Endothelial cell of umbilical vein (primary cell): ENCODE measurements at regions of chr16 and their contacts with region 1.

Region 1: DNA sequence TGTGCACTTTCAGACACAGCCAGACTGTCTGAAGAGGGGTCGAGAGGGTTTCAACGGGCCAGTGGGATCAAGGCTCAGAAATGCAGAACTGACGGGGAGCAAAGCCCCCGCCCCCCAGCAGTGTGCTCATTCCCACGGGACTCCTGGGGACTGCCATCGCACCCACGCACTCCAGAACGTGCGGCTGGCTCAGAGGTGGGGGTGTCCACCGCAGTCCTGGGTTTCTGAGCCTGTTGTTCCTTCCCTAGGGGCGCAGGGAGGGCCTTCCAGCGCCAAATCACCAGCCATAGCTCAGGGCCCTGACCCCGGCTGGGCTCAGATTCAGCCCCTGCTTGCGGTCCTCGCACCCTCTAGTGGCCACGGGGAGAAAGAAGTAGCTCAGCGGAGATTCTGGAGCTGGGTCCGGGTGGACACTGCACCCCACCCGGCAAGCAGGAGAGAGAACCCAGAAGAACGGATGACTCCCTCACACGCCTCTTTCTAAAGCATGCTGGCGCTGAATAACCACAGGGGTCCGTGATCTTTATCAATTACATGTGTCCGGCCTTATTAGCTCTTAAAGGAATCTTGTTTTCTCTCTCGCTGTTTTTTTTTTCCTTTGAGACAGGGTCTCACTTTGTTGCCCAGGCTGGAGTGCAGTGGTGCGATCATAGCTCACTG is 45.0 kb upstream of the USP7 start:
- DNase-seq: peak; percentile 59
- H3K4me3 ChIP-seq: peak overlapping the region in 1 of 3 experiments; percentile 3
- H3K27ac ChIP-seq: no peak overlapping the region
- H3K4me1 ChIP-seq: peaks cover 4% of the 10 kb centered on the region
- H3K27me3 ChIP-seq: no peaks in the 10 kb centered on the region
- CTCF ChIP-seq: peak; percentile 70 to 90
- POLR2A ChIP-seq: no peak

Region 2: DNA sequence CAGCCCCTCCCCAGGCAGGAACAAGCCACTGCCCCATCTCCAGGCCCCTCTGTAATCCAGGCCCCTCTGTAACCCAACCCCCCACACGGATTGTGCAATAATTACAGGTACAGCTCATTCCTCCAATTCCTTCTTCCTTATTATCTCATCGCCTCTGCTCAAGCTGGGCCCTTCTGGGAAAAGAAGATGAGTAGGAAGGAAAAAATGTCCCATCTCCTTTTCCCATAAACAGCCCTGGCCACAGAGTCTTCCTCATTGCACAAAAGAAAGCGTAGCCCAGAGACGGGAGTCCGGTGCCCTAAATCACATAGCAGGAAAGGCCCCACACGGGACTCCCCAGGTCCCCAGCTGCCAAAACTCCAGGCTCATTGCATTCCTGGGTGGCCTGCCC is 130.2 kb before region 1 on chr16:
- CTCF ChIA-PET with region 1: interaction called, 23 read pairs
- POLR2A ChIA-PET with region 1: no interaction called
- dilution Hi-C with region 1: no loop called
- intact Hi-C with region 1: no loop called
- DNase-seq: no peak
- H3K4me3 ChIP-seq: no peak overlapping the region
- H3K27ac ChIP-seq: no peak overlapping the region
- H3K4me1 ChIP-seq: no peaks in the 10 kb centered on the region
- H3K27me3 ChIP-seq: peaks cover 0 to 2% of the 10 kb centered on the region in 2 experiments
- CTCF ChIP-seq: no peak
- POLR2A ChIP-seq: no peak

Region 3: GRCh38 chr16:8905168-8905762 is 103.5 kb before region 1 on chr16:
- CTCF ChIA-PET with region 1: interaction called, 42 read pairs
- POLR2A ChIA-PET with region 1: no interaction called
- dilution Hi-C with region 1: no loop called
- intact Hi-C with region 1: loop called (anchors 1 kb)
- DNase-seq: peak; percentile 42
- H3K4me3 ChIP-seq: no peak overlapping the region
- H3K27ac ChIP-seq: no peak overlapping the region
- H3K4me1 ChIP-seq: no peaks in the 10 kb centered on the region
- H3K27me3 ChIP-seq: no peaks in the 10 kb centered on the region
- CTCF ChIP-seq: peak; percentile 27 to 50
- POLR2A ChIP-seq: no peak

Region 4: DNA sequence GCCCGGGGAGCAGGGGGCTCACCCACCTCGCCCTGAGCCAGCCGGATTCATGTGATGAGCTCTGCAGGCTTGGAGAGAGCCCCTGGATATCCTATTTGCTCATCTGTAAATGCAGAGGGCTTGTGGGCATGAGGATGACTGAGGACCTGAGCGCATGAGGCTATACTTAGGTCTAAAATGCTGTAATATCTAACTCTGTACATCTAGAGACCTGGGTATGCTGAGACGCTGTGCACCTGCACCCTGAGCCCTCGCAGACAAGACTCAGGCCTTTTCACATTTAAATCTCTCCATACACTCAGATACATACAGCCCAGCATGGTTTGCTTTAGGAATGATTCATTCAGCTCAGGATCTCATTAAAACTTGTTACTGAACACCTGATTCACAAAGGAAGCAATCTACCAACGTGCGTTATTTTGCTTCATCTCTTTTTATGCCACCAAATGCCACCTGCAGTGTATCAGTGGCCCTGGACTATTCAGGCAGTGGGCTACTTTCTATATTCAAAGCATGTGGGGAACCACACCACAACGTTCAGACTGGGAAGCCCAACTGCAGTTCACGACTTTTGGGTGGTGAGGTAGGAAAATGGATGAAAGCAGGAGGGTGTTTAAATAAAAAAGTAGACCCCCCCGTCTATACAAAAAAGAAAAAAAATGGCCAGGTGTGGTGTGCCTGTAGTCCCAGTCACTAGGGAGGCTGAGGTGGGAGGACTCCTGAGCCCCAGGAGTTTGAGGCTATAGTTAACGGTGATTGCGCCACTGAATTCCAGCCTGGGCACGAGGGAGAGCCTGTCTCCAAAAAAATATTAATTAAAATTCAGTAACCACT is 57.1 kb before region 1 on chr16:
- CTCF ChIA-PET with region 1: interaction called, 19 read pairs
- POLR2A ChIA-PET with region 1: no interaction called
- dilution Hi-C with region 1: no loop called
- intact Hi-C with region 1: no loop called
- DNase-seq: no peak
- H3K4me3 ChIP-seq: no peak overlapping the region
- H3K27ac ChIP-seq: no peak overlapping the region
- H3K4me1 ChIP-seq: no peaks in the 10 kb centered on the region
- H3K27me3 ChIP-seq: no peaks in the 10 kb centered on the region
- CTCF ChIP-seq: no peak
- POLR2A ChIP-seq: no peak

Region 5: DNA sequence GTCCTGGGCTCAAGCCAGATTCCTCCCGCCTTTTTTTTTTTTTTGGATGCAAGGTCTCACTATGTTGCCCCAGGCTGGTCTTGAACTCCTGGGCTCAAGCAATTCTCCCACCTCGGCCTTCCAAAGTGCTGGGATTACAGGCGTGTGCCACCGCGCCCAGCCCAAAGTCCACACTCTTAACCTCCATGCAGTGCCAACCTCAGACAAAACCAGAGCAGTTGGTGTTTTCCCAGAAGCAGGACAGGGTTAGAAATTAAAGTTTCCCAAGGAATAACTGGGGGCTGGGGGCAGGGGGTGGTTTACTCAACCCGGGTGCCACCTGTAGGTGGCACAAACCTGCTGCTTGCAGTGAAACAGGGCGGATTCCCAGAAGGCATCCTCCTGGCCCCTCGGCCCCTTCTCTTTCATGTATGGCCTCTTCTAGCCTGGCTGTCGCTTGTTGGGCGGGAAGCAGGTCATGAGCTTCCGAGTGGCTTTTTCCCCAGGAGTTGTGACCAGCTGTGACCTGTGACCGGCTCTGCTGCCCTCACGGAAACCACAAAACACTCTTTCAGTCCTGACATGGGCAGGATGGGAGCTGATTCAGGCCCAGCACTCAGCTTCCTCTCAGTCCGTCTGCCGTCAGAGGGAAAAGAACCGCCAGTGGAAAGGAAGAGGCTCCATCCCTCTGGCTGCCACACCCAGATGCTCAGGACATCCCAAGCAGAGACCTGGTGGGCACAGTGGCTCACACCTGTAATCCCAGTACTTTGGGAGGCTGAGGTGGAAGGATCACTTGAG is 19.4 kb before region 1 on chr16:
- CTCF ChIA-PET with region 1: interaction called, 24 read pairs
- POLR2A ChIA-PET with region 1: no interaction called
- dilution Hi-C with region 1: no loop called
- intact Hi-C with region 1: no loop called
- DNase-seq: no peak
- H3K4me3 ChIP-seq: no peak overlapping the region
- H3K27ac ChIP-seq: no peak overlapping the region
- H3K4me1 ChIP-seq: no peaks in the 10 kb centered on the region
- H3K27me3 ChIP-seq: no peaks in the 10 kb centered on the region
- CTCF ChIP-seq: no peak
- POLR2A ChIP-seq: no peak

Region 6: DNA sequence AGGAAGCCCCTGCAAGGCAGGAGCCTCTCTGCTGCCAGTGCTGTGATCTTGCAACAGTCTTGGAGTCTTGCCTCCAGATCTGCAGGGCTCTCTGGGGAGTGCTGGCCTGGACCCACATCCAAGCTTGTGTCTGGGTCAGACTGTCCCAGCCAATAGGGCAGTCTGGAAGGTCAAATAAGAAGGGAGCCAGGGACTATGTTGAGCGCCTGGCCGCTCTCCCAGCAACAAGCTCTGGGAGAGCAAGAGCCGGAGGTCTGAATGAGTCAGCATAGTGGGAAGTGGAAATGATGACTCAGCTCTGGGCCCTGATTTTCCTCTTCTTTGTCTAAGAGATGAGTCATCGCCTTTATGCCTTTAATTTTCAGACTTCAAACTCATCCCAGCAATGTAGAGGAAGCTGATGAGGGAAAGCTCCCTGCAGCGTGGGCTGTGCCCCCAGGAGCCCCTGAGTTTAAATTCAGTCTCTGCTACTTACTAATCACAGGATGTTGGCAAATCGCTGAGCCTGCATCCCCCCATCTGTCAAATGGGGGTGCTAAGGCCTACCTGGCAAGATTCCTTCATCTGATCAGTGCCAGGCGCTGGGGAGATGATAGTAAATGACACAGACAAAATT is 39.1 kb after region 1 on chr16:
- CTCF ChIA-PET with region 1: interaction called, 30 read pairs
- POLR2A ChIA-PET with region 1: no interaction called
- dilution Hi-C with region 1: no loop called
- intact Hi-C with region 1: no loop called
- DNase-seq: peak; percentile 98
- H3K4me3 ChIP-seq: no peak overlapping the region
- H3K27ac ChIP-seq: peak overlapping the region; percentile 94
- H3K4me1 ChIP-seq: peaks cover 15% of the 10 kb centered on the region
- H3K27me3 ChIP-seq: no peaks in the 10 kb centered on the region
- CTCF ChIP-seq: no peak
- POLR2A ChIP-seq: no peak

Region 7: DNA sequence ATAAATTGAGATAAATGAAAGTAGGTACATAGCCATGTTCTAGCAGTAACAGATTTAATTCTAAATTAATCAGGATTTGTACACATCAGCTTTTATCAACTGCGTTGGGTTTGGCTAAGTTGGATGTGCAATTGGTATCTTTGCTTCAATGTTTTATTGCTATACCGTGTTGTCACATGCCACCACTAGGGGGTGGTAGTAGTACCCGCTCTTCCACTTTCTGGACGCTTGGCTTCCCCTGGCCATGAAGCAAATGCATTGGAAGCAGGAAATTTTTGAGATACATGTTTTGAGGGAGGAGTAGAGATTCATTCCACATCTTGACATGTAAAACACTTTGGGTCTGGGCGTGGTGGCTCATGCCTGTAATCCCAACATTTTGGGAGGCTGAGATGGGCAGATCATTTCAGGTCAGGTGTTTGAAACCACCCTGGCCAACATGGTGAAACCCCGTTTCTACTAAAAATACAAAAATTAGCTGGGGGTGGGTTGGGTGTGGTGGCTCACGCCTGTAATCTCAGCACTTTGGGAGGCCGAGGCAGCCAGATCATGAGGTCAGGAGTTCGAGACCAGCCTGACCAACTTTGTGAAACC is 1513.0 kb after region 1 on chr16:
- CTCF ChIA-PET with region 1: no interaction called
- POLR2A ChIA-PET with region 1: interaction called, 11 read pairs
- dilution Hi-C with region 1: no loop called
- intact Hi-C with region 1: no loop called
- DNase-seq: peak; percentile 49
- H3K4me3 ChIP-seq: no peak overlapping the region
- H3K27ac ChIP-seq: no peak overlapping the region
- H3K4me1 ChIP-seq: no peaks in the 10 kb centered on the region
- H3K27me3 ChIP-seq: no peaks in the 10 kb centered on the region
- CTCF ChIP-seq: peak; percentile 69 to 82
- POLR2A ChIP-seq: no peak